Dorsolateral prefrontal cortex (tissue), 120 donors: ENCODE measurements at regions of chr5 and their contacts with region 1.

Region 1: DNA sequence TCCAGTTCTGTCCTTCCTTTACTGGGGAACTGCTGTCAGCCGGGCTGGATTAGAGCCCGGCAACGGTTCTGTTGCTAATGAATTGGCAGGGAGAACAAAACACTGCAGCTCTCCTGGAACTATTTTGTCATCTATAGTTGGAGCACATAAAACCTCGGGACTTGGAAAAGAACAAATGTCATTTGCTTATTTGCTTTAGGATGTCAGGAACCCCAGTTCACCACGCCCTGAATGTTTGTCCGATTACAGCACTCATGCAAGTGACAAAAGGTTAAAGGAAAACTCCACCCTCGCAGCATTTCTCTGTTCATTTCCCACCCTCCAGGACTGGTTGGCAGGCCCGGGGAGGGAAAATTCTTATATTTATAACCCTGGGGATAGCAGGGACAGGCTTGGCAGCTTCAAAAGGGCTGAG is 66.4 kb upstream of the PLPP1 start:
- DNase-seq: peak; percentile 31 to 79 (median 68)
- H3K4me3 ChIP-seq: peak overlapping the region in 37 of 59 donors; percentile 1 to 54 (median 26)
- H3K27ac ChIP-seq: peak overlapping the region; percentile 32 to 99 (median 94)
- H3K27me3 ChIP-seq: no peaks in the 10 kb centered on the region
- CTCF ChIP-seq: peak in 3 of 56 donors; percentile 3 to 34 (median 13)

Region 2: GRCh38 chr5:55324815-55325418 is 276.3 kb before region 1 on chr5:
- intact Hi-C with region 1: loop called in 1 of 2 experiments (anchors 5 kb)
- DNase-seq: no peak
- H3K4me3 ChIP-seq: no peak overlapping the region
- H3K27ac ChIP-seq: peak overlapping the region in 1 of 59 donors; percentile 12
- H3K27me3 ChIP-seq: no peaks in the 10 kb centered on the region
- CTCF ChIP-seq: peak; percentile 45 to 84 (median 72)

Region 3: DNA sequence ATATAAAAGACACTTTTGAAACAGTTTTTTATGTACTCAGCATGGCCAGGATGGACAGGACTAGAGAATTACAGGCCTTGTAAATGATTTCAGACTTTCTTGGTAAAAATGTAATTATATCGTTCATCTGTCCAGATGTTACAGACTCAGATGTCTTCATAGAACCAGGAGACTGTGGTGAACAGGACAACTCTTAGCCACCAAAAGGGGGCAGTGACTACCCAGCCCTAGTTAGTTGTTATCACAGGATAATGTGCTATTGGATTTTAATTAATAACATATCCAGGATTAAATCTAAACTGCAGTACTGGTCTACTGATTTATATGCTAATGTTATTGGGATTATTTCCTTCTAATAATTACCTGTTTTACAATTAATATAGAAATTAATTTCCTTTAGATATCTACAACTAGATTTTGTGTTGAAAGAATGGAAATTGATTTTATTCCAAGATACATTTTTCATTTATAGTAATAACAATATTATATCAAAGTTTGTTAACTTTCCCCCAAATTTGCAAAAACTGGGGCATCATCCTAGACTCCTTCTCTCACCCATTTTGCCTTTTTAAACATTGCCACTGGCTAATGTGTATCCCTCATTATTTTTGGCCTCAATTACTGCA is 194.0 kb before region 1 on chr5:
- intact Hi-C with region 1: loop called (anchors 2 to 5 kb)
- DNase-seq: peak in 3 of 10 donors; percentile 18 to 57 (median 42)
- H3K4me3 ChIP-seq: no peak overlapping the region
- H3K27ac ChIP-seq: peak overlapping the region in 7 of 59 donors; percentile 6 to 40 (median 14)
- H3K27me3 ChIP-seq: no peaks in the 10 kb centered on the region
- CTCF ChIP-seq: peak in 55 of 56 donors; percentile 42 to 90 (median 73)

Region 4: DNA sequence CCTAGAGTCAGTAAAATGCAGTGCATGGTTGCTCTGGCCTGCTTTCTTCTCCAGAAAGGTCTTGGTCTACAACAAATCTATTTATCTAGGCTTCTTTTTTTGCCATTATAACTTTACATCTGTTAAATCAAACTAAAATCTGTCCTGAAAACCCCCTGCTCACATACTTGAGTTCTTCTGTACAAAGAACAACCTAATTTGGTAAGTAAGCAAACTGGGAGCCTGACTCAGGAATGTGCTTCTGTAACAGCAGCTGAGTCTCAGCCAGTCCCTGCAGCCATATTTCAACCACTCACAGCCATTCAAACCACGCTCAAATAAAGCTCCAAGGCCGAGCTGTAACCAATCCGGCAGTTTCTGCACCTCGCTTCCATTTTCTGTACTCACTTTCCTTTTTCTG is 162.2 kb before region 1 on chr5:
- intact Hi-C with region 1: loop called in 1 of 2 experiments (anchors 10 kb)
- DNase-seq: peak in 2 of 10 donors; percentile 20 to 51
- H3K4me3 ChIP-seq: peak overlapping the region in 1 of 59 donors; percentile 26
- H3K27ac ChIP-seq: peak overlapping the region; percentile 56 to 95 (median 87)
- H3K27me3 ChIP-seq: no peaks in the 10 kb centered on the region
- CTCF ChIP-seq: no peak

Region 5: DNA sequence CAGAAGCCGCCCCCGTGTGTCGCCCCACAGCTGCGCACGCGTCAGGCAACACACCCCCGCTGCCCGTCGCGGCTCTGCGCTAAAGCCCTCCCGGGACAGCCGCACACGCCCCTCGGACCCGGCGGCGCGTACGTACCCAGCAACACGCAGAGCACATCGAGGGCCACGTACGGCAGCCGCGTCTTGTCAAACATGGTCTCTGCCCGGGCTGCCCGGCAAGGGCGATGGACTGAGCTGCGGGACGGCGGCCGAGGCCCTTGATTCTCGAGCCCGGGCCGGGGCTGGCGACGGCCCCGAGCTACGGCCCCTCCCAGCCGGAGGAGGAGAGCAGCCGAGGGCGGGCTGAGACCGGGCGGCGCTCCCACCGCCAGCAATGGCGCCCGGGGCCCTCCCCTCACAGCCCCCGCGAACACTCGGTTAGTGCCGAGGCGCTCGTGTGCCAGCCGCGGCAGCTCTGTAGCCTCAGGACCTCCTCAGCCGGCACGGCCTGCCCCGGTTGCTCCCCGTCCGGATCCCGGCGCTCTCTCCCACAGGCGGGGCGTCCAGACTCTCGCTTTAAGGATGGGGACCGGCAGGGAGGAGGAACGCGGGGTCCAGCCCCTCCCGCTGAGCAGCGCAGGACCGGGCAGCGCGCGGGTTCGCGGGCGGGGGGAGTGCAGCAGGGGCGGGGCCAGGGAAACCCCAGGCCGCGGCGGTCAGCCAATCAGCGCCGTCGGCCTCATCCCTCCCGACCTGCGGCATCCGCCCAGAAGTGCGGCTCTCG is 66.6 kb before region 1 on chr5 and contains the start of gene PLPP1:
- intact Hi-C with region 1: loop called (anchors 1 to 2 kb)
- DNase-seq: peak; percentile 91 to 98 (median 94)
- H3K4me3 ChIP-seq: peak within 1 kb of the TSS; percentile 60 to 98 (median 88)
- H3K27ac ChIP-seq: peak within 1 kb of the TSS; percentile 89 to 100 (median 99)
- H3K27me3 ChIP-seq: no peaks in the 10 kb centered on the region
- CTCF ChIP-seq: peak in 29 of 56 donors; percentile 2 to 52 (median 20)
- total RNA-seq, gene PLPP1: 42.8 to 88.1 (median 59.2) TPM

Region 6: GRCh38 chr5:55672477-55672911 is 71.3 kb after region 1 on chr5:
- intact Hi-C with region 1: loop called in 1 of 2 experiments (anchors 5 kb)
- DNase-seq: no peak
- H3K4me3 ChIP-seq: peak overlapping the region in 2 of 59 donors; percentile 16 to 28
- H3K27ac ChIP-seq: peak overlapping the region in 57 of 59 donors; percentile 4 to 89 (median 71)
- H3K27me3 ChIP-seq: no peaks in the 10 kb centered on the region
- CTCF ChIP-seq: no peak